ENCODE measurements at regions of chr7 and their contacts with region 1.

Region 1: GRCh38 chr7:5423844-5424688 is 432 bp upstream of the TNRC18 start:
- DNase-seq: peak; percentile 99
- ATAC-seq: peak; percentile 19
- H3K4me3 ChIP-seq: peak overlapping the region; percentile 83 to 91
- H3K27ac ChIP-seq: peak overlapping the region; percentile 100
- H3K4me1 ChIP-seq: peaks cover 0 to 41% of the 10 kb centered on the region in 2 experiments; a peak in 3 of 4 replicates
- H3K27me3 ChIP-seq: no peaks in the 10 kb centered on the region
- CTCF ChIP-seq: no peak
- POLR2A ChIP-seq: peak; percentile 15
- RAD21 ChIP-seq: no peak

Region 2: DNA sequence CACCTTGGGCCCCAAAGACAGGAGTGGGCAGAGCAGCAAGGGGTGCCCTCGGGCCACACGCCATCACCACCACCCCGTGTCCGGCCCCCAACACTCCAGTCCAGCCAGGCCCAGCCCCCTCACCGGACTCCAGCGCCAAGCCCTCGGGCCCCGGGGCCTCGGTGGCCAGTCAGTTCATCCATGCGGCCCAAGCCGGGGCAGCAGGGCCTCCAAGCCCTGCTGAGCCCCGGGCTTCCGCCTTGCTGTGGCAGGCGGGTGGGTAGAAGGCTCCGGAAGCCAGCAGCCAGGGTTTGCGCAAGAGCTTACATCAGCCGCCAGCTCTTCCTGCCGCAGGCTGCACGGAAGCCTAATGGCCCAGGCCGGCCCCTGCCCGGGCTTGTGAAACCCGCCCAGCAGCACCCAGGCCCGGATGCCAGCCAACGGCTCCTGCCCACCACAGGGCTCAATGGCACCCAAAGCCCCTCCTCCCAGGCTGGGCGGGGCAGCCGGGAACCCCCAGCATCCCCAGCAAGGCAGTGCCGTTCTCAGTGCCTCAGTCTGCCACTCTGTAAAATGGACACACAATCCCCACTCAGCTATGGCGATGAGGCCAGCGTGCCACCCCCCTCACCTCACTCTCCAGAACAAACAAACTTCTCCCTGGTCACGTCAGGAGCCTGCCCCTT is 26.9 kb before region 1 on chr7:
- CTCF ChIA-PET with region 1: no interaction called
- POLR2A ChIA-PET with region 1: interaction called, 18 read pairs
- RAD21 ChIA-PET with region 1: interaction called in 1 of 2 experiments, 3 read pairs
- intact Hi-C with region 1: no loop called
- DNase-seq: peak; percentile 86
- ATAC-seq: peak; percentile 84
- H3K4me3 ChIP-seq: peak overlapping the region; percentile 83 to 89
- H3K27ac ChIP-seq: peak overlapping the region; percentile 92
- H3K4me1 ChIP-seq: peaks cover 37 to 62% of the 10 kb centered on the region in 2 experiments
- H3K27me3 ChIP-seq: no peaks in the 10 kb centered on the region
- CTCF ChIP-seq: no peak
- POLR2A ChIP-seq: no peak
- RAD21 ChIP-seq: no peak

Measured in HCT116 (cell line).